K562 (cell line): ENCODE measurements at regions of chr16 and their contacts with region 1.

Region 1: GRCh38 chr16:23871924-23872323 is 36.1 kb downstream of the PRKCB start:
- DNase-seq: no peak
- ATAC-seq: no peak
- H3K4me3 ChIP-seq: no peak overlapping the region
- H3K27ac ChIP-seq: no peak overlapping the region
- H3K4me1 ChIP-seq: peaks cover 11 to 19% of the 10 kb centered on the region in 2 experiments; a peak in 4 of 5 replicates
- H3K27me3 ChIP-seq: no peaks in the 10 kb centered on the region
- CTCF ChIP-seq: no peak
- EP300 ChIP-seq: no peak
- POLR2A ChIP-seq: no peak
- RAD21 ChIP-seq: no peak

Region 2: GRCh38 chr16:23859713-23860269 is 12.1 kb before region 1 on chr16:
- CTCF ChIA-PET with region 1: no interaction called
- POLR2A ChIA-PET with region 1: interaction called, 14 read pairs
- in situ Hi-C with region 1: no loop called
- intact Hi-C with region 1: no loop called
- DNase-seq: no peak
- ATAC-seq: no peak
- H3K4me3 ChIP-seq: no peak overlapping the region
- H3K27ac ChIP-seq: no peak overlapping the region
- H3K4me1 ChIP-seq: peaks cover 29 to 68% of the 10 kb centered on the region in 2 experiments
- H3K27me3 ChIP-seq: no peaks in the 10 kb centered on the region
- CTCF ChIP-seq: no peak
- EP300 ChIP-seq: no peak
- POLR2A ChIP-seq: no peak
- RAD21 ChIP-seq: no peak